ENCODE measurements at regions of chr1 and their contacts with region 1.

Region 1: DNA sequence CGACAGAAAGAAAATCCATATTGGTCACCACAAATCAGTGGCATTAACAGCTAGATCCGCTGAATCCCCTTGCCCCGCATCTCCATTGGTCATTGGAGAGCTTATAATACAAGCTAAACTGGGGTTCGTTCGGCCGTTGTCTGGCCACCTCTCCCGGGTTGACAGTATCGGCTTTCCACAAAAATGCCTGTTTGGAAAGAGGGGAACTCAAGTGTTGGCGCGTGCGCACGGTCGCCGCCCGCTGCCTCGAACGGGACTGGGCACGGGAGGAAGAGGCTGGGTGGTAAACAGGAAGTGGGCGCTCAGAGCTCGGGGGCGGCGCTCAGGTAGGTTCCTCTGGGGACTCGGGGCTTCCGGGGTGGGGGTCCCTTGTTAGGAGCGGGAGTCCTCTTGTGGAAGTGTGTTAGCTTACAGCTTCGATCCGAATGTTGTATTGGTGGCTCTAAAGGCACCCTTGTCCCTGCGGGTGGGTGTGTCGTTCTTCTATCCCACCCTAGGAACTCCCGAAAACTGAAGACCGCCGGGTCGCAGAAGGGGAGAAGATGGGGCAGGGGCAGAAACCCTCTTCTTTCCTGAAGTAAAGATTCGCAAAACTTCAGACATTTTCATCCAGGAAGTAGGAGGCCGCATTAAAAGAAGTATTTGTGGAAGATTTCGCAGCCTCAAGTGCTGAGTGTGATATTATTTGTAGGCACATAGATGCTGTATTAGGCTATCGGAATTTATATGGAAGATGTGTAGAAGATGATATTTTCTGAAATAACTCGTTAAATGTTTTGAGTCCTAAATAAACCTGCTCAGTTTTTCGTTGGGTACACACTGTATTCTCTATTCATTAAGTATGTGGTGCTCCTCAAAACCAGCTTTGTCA is 962 bp downstream of the BROX start:
- H3K4me3 ChIP-seq: peak overlapping the region; percentile 84
- H3K27ac ChIP-seq: peak overlapping the region; percentile 76
- H3K4me1 ChIP-seq: no peaks in the 10 kb centered on the region
- CTCF ChIP-seq: no peak; the same call in 1 of the 2 replicates

Region 2: DNA sequence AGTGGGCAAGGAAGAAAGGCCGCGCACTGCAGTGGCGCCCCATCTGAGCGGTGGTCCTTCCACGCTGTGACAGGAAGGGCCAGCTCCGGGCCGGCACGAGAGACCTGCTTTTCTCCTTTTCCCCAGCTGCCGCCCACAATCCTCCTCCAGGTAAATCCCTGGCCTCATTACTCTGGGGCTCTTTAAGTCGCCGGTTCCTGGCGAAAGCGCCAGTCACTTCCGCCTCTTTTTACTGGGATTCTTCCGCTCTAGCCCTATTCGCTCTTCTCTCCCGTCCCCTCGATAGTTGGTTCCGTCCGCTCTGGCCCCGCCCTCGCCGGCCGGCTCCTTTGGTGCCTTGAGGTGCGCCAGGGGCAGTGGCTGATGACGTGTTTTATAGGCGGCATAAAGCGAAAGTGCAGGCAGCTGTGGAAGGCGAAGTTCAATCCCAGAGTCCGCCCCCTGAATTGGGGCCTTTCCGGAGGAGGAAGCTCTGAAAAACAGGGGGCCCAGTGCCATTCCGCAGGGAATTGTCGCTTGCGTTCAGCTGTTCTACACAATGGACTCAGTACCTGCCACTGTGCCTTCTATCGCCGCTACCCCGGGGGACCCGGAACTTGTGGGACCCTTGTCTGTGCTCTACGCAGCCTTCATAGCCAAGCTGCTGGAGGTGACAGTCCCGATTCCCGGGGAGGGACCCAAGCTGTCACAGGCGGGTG is 69.2 kb before region 1 on chr1:
- CTCF ChIA-PET with region 1: no interaction called
- POLR2A ChIA-PET with region 1: interaction called, 10 read pairs
- H3K4me3 ChIP-seq: peak overlapping the region; percentile 60
- H3K27ac ChIP-seq: peak overlapping the region; percentile 77
- H3K4me1 ChIP-seq: peaks cover 3% of the 10 kb centered on the region; the same call in 1 of the 2 replicates
- CTCF ChIP-seq: peak; percentile 35

Region 3: GRCh38 chr1:222829868-222830267 is 116.5 kb after region 1 on chr1:
- CTCF ChIA-PET with region 1: no interaction called
- POLR2A ChIA-PET with region 1: no interaction called
- H3K4me3 ChIP-seq: no peak overlapping the region
- H3K27ac ChIP-seq: no peak overlapping the region
- H3K4me1 ChIP-seq: peaks cover 24% of the 10 kb centered on the region
- CTCF ChIP-seq: no peak

Region 4: DNA sequence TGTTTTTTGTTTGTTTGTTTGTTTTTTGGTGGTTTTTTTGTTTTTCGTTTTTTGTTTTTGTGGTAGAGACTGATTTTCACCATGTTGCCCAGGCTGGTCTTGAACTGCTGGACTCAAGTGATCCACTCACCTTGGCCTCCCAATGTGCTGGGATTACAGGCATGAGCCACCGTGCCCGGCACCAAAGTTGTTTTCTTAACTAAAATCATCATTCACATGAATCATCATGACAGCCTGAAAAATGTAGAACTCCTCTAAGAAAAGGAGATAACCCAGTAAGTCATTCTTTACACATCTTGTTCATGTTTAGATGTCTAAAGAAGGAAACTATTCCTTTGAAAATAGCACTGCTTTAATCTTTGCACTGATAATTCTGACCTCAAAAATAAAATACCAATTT is 139.0 kb after region 1 on chr1:
- CTCF ChIA-PET with region 1: no interaction called
- POLR2A ChIA-PET with region 1: no interaction called
- H3K4me3 ChIP-seq: no peak overlapping the region
- H3K27ac ChIP-seq: no peak overlapping the region
- H3K4me1 ChIP-seq: no peaks in the 10 kb centered on the region
- CTCF ChIP-seq: no peak

Measured in HEK293 (cell line).